ENCODE measurements at regions of chr6 and their contacts with region 1.

Region 1: GRCh38 chr6:71367756-71368155 is 79.1 kb downstream of the OGFRL1 start:
- DNase-seq: no peak
- H3K4me3 ChIP-seq: no peak overlapping the region
- H3K27ac ChIP-seq: no peak overlapping the region
- H3K4me1 ChIP-seq: peaks cover 4 to 7% of the 10 kb centered on the region in 2 donors
- H3K27me3 ChIP-seq: no peaks in the 10 kb centered on the region
- CTCF ChIP-seq: no peak
- POLR2A ChIP-seq: no peak

Region 2: GRCh38 chr6:71181565-71181964 is 186.2 kb before region 1 on chr6:
- intact Hi-C with region 1: loop called (anchors 10 kb)
- DNase-seq: no peak
- H3K4me3 ChIP-seq: no peak overlapping the region
- H3K27ac ChIP-seq: no peak overlapping the region
- H3K4me1 ChIP-seq: no peaks in the 10 kb centered on the region
- H3K27me3 ChIP-seq: no peaks in the 10 kb centered on the region
- CTCF ChIP-seq: no peak
- POLR2A ChIP-seq: no peak

Region 3: DNA sequence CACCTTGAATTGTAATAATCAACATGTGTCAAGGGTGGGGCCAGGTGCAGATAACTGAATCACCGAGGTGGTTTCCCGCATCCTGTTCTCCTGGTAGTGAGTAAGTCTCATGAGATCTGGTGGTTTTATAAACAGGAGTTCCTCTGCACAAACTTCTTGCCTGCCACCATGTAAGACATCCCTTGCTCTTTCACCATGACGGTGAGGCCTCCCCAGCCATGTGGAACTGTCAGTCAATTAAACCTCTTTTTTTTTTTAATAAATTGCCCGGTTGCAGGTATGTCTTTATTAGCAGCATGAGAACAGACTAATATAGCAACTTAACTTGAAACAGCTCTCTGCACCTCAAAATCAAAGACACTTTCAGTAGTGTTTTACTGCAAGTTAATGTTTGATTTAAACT is 42.4 kb after region 1 on chr6:
- intact Hi-C with region 1: no loop called
- DNase-seq: no peak
- H3K4me3 ChIP-seq: no peak overlapping the region
- H3K27ac ChIP-seq: peak overlapping the region in 2 of 3 donors; percentile 72 to 97
- H3K4me1 ChIP-seq: peaks cover 75 to 82% of the 10 kb centered on the region in 2 donors
- H3K27me3 ChIP-seq: no peaks in the 10 kb centered on the region
- CTCF ChIP-seq: no peak
- POLR2A ChIP-seq: no peak

Region 4: DNA sequence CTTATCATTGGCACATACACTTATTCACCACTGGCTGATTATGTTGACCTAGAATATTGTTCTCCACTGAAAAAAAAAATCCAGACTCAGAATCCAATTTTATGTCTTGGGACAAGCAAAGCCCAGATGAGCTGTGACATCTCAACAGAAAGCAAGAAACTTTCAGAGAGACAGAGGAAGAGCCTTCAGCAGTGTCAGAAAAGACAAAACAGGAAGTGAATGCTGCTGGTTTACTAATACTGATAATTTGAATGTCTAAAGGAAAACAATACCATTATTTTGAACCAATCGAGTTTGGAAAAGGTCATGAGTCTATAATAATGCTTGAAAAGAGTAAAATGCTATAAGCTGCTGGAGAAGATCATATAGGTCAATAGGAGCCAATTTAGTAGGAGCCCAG is 338.8 kb after region 1 on chr6:
- intact Hi-C with region 1: no loop called
- DNase-seq: no peak
- H3K4me3 ChIP-seq: no peak overlapping the region
- H3K27ac ChIP-seq: no peak overlapping the region
- H3K4me1 ChIP-seq: no peaks in the 10 kb centered on the region
- H3K27me3 ChIP-seq: no peaks in the 10 kb centered on the region
- CTCF ChIP-seq: no peak
- POLR2A ChIP-seq: no peak

Measured in thyroid gland (tissue), 4 donors.